Gastrocnemius medialis (tissue), 4 donors: ENCODE measurements at regions of chrX and their contacts with region 1.

Region 1: DNA sequence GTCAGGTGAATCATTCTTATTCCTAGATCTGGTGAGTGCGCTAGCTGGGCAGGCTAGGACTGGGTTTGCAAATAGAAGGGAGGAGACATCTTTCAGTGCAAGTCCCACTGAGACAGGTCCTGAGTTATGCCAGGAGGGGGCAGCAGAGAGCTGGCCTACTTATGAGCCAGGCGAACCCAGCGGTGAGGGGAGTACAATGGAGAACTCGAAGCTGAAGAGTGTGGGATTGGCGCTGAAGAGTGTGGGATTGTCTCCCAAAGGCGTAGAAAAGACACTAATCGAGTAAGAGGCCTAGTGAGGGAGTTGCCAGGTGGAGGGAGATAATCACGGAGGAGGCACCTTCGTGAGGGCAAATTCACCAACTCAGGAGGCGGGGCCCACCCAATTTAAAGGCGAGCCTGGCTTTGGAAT is 91.7 kb upstream of the CXorf66 start:
- DNase-seq: peak; percentile 1 to 26
- ATAC-seq: peak in 1 of 2 donors; percentile 56
- H3K4me3 ChIP-seq: no peak overlapping the region
- H3K27ac ChIP-seq: no peak overlapping the region
- H3K4me1 ChIP-seq: no peaks in the 10 kb centered on the region
- H3K27me3 ChIP-seq: peaks cover 0 to 4% (median 0%) of the 10 kb centered on the region in 3 donors
- CTCF ChIP-seq: peak in 4 of 5 experiments; percentile 48 to 73 (median 61)
- POLR2A ChIP-seq: no peak

Region 2: DNA sequence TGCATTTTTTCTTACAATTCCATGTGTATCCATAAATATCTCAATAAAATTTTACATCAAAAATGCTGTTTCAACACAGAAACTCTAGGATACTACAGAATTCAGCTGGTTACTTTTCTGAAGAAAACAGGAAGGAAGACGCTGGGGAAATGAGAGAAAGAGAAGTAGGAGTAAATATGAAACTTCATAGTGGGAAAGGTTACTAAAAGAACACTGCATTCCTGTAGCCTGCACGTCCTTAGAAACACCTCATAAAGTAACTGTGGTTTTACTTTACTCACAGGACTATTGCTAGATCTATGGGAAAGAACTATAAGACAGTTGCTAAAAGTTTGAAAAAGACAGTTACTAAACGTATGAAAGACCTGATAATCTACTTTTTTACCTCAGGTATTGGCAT is 147.3 kb before region 1 on chrX:
- in situ Hi-C with region 1: no loop called
- intact Hi-C with region 1: no loop called
- DNase-seq: no peak
- ATAC-seq: no peak
- H3K4me3 ChIP-seq: no peak overlapping the region
- H3K27ac ChIP-seq: no peak overlapping the region
- H3K4me1 ChIP-seq: peaks cover 0 to 3% of the 10 kb centered on the region in 2 donors
- H3K27me3 ChIP-seq: no peaks in the 10 kb centered on the region
- CTCF ChIP-seq: no peak
- POLR2A ChIP-seq: no peak

Region 3: GRCh38 chrX:140141444-140142029 is 84.5 kb after region 1 on chrX:
- in situ Hi-C with region 1: loop called in 1 of 4 experiments (anchors 5 kb)
- intact Hi-C with region 1: no loop called
- DNase-seq: no peak
- ATAC-seq: no peak
- H3K4me3 ChIP-seq: no peak overlapping the region
- H3K27ac ChIP-seq: no peak overlapping the region
- H3K4me1 ChIP-seq: no peaks in the 10 kb centered on the region
- H3K27me3 ChIP-seq: no peaks in the 10 kb centered on the region
- CTCF ChIP-seq: peak in 3 of 5 experiments; percentile 18 to 50 (median 26)
- POLR2A ChIP-seq: no peak

Region 4: DNA sequence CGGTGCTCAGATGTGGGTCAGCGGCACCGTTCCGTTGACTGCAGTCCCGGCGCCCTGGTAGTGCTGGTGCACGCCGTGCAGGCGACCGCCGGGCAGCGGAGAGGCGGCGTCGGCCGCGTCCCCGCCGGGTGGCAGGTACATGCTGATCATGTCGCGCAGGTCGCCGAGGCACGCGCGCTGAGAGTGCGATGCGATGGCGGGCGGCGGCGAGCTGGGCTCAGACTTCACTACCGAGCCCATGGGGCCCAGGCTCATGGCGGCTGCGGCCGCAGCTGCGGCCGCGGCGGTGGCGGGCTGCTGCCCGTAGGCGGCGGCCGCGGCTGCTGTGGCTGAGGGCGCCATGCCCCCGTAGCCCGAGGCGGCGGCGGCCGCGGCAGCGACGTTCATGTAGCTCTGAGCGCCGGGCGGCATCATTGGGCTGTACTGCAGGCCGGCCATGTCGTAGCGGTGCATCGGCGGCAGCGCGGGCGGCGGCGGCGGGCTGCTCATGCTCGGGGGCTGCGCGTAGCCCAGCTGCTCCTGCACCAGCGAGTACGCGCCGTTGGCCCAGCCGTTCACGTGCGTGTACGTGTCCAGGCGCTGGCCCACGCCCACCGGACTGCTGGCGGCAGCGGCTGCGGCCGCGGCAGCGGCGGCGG is 446.8 kb after region 1 on chrX:
- in situ Hi-C with region 1: no loop called
- intact Hi-C with region 1: loop called (anchors 5 kb)
- DNase-seq: no peak
- ATAC-seq: peak; percentile 47 to 49
- H3K4me3 ChIP-seq: peak overlapping the region; percentile 21 to 36 (median 27)
- H3K27ac ChIP-seq: no peak overlapping the region
- H3K4me1 ChIP-seq: peaks cover 5 to 14% of the 10 kb centered on the region in 2 donors
- H3K27me3 ChIP-seq: peaks cover 54 to 80% (median 71%) of the 10 kb centered on the region in 3 donors
- CTCF ChIP-seq: no peak
- POLR2A ChIP-seq: no peak

Region 5: GRCh38 chrX:140664939-140665338 is 607.9 kb after region 1 on chrX:
- in situ Hi-C with region 1: loop called in 1 of 4 experiments (anchors 25 kb)
- intact Hi-C with region 1: no loop called
- DNase-seq: no peak
- ATAC-seq: no peak
- H3K4me3 ChIP-seq: no peak overlapping the region
- H3K27ac ChIP-seq: no peak overlapping the region
- H3K4me1 ChIP-seq: no peaks in the 10 kb centered on the region
- H3K27me3 ChIP-seq: no peaks in the 10 kb centered on the region
- CTCF ChIP-seq: peak in 1 of 5 experiments; percentile 17
- POLR2A ChIP-seq: no peak

Region 6: GRCh38 chrX:140733769-140734342 is 676.9 kb after region 1 on chrX:
- in situ Hi-C with region 1: loop called in 1 of 4 experiments (anchors 10 kb)
- intact Hi-C with region 1: no loop called
- DNase-seq: no peak
- ATAC-seq: no peak
- H3K4me3 ChIP-seq: no peak overlapping the region
- H3K27ac ChIP-seq: no peak overlapping the region
- H3K4me1 ChIP-seq: no peaks in the 10 kb centered on the region
- H3K27me3 ChIP-seq: no peaks in the 10 kb centered on the region
- CTCF ChIP-seq: peak in 3 of 5 experiments; percentile 41 to 66 (median 44)
- POLR2A ChIP-seq: no peak

Region 7: GRCh38 chrX:140983730-140984129 is 926.7 kb after region 1 on chrX:
- in situ Hi-C with region 1: no loop called
- intact Hi-C with region 1: no loop called
- DNase-seq: no peak
- ATAC-seq: no peak
- H3K4me3 ChIP-seq: no peak overlapping the region
- H3K27ac ChIP-seq: no peak overlapping the region
- H3K4me1 ChIP-seq: no peaks in the 10 kb centered on the region
- H3K27me3 ChIP-seq: no peaks in the 10 kb centered on the region
- CTCF ChIP-seq: no peak
- POLR2A ChIP-seq: no peak